IMR-90 (cell line): ENCODE measurements at regions of chr3 and their contacts with region 1.

Region 1: DNA sequence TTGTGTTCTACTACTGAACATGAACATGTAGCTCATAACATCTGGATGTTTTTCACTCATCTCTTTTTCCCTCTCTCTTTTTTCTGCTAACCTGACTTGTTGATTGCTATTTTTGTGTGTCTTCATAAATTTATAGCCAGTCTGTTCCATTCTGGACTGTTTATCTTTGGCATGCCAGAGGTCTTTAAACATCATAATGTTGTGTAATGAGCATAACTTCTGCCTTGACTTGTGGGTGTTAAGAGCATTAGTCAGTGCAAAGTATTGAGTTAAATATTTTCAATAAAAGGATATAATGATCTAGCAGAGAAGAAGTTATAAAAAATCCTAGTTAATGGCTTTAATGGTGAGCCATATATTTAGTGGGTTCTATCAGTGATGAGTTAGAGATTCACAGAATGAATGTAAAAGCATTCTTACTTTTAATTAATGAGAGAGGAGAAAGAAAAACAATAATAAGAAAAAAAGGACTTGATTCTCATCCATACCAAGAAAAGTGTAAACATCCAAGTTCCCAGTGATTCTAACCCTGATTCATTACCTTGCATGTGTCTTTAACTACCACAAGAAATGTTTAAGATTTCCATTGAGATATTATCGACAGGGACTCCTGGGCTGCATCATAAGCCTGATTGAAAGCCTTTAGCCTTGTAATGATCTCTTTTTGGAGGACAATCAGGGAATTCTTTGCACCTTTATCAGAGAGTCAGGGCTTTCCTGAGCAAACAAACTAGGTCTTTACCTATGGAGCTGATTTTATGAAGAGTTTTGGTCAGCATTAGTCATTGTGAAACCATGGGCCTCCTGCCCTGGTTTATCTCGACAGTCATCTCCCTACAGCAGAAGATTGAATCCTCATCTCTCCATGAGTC is 22.9 kb downstream of the MITF start:
- DNase-seq: peak; percentile 88
- ATAC-seq: peak; percentile 82
- H3K4me3 ChIP-seq: no peak overlapping the region
- H3K27ac ChIP-seq: peak overlapping the region; percentile 65
- H3K4me1 ChIP-seq: peaks cover 24% of the 10 kb centered on the region
- H3K27me3 ChIP-seq: no peaks in the 10 kb centered on the region
- CTCF ChIP-seq: no peak
- POLR2A ChIP-seq: no peak
- RAD21 ChIP-seq: no peak

Region 2: GRCh38 chr3:69747511-69748258 is 14.4 kb before region 1 on chr3:
- CTCF ChIA-PET with region 1: interaction called, 3 read pairs
- POLR2A ChIA-PET with region 1: no interaction called
- dilution Hi-C with region 1: no loop called
- in situ Hi-C with region 1: no loop called
- intact Hi-C with region 1: loop called (anchors 2 kb)
- DNase-seq: peak; percentile 73
- ATAC-seq: peak; percentile 67
- H3K4me3 ChIP-seq: no peak overlapping the region
- H3K27ac ChIP-seq: peak overlapping the region; percentile 87; the same call in 1 of the 2 replicates
- H3K4me1 ChIP-seq: peaks cover 31% of the 10 kb centered on the region
- H3K27me3 ChIP-seq: no peaks in the 10 kb centered on the region
- CTCF ChIP-seq: no peak
- POLR2A ChIP-seq: no peak
- RAD21 ChIP-seq: no peak

Region 3: GRCh38 chr3:70501561-70501960 is 739.4 kb after region 1 on chr3:
- CTCF ChIA-PET with region 1: no interaction called
- POLR2A ChIA-PET with region 1: no interaction called
- dilution Hi-C with region 1: no loop called
- in situ Hi-C with region 1: no loop called
- intact Hi-C with region 1: no loop called
- DNase-seq: no peak
- ATAC-seq: no peak
- H3K4me3 ChIP-seq: no peak overlapping the region
- H3K27ac ChIP-seq: no peak overlapping the region
- H3K4me1 ChIP-seq: no peaks in the 10 kb centered on the region
- H3K27me3 ChIP-seq: peaks cover 11% of the 10 kb centered on the region
- CTCF ChIP-seq: no peak
- POLR2A ChIP-seq: no peak
- RAD21 ChIP-seq: no peak